Breast epithelium (tissue), 4 donors: ENCODE measurements at regions of chr18 and their contacts with region 1.

Region 1: DNA sequence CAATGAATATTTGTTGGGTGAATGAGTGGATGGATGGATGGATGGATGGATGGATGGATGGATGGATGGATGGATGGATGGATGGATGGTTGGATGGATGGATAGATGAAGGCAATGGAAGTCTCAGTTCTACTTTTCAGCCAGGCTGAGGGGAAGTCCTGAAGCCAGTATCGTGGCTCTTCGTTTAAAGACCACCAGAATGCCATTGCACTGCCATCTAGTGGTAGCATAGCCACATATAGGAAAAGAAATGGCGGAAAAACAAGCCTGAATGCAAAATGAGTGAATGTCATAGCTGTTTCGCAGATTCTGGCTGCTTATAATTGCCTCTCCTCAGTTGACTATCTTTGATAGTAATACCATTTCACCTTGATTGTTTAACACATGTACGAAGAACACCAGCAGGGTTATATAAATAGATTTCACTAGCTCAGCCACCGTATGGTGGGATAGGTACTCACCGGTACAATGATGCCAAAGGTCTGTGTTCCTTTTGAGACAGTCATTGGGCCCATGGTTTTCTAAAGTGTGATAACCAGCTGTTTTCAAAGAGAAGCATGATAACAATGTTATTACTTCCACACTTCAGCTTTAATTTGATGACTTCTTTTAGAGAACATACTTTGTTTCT is 62.3 kb upstream of the GREB1L start:
- DNase-seq: no peak
- H3K4me3 ChIP-seq: no peak overlapping the region
- H3K27ac ChIP-seq: no peak overlapping the region
- H3K4me1 ChIP-seq: no peaks in the 10 kb centered on the region
- H3K27me3 ChIP-seq: no peaks in the 10 kb centered on the region
- CTCF ChIP-seq: peak in 2 of 3 donors; percentile 49 to 64
- POLR2A ChIP-seq: no peak

Region 2: GRCh38 chr18:22703883-22704585 is 1524.3 kb after region 1 on chr18:
- intact Hi-C with region 1: loop called (anchors 10 kb)
- DNase-seq: no peak
- H3K4me3 ChIP-seq: no peak overlapping the region
- H3K27ac ChIP-seq: no peak overlapping the region
- H3K4me1 ChIP-seq: no peaks in the 10 kb centered on the region
- H3K27me3 ChIP-seq: no peaks in the 10 kb centered on the region
- CTCF ChIP-seq: peak; percentile 22 to 79 (median 70)
- POLR2A ChIP-seq: no peak